ENCODE measurements at regions of chr13 and their contacts with region 1.

Region 1: DNA sequence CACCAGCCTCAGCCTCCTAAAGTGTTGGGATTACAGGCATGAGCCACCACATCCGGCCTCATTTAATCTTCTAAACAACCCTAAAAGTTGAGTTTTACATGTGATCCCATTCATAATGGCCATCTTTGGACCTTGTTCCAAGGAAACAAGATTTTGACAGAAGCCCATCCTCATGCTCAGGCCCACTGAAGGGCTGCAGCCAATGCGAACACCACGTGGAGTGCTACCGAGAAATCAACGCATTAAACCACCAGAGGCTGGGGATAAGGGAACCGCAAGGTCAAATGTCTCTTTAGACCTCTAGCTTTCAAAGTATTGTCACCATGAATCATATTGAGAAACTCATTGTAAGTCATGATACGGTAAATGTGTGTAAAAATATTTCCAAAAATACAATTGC is 49.4 kb upstream of the DOCK9 start:
- DNase-seq: peak; percentile 73
- H3K4me3 Mint-ChIP-seq: peak overlapping the region; percentile 44
- H3K27ac Mint-ChIP-seq: peak overlapping the region; percentile 90
- H3K4me1 Mint-ChIP-seq: peaks cover 93% of the 10 kb centered on the region
- H3K27me3 Mint-ChIP-seq: no peaks in the 10 kb centered on the region

Region 2: DNA sequence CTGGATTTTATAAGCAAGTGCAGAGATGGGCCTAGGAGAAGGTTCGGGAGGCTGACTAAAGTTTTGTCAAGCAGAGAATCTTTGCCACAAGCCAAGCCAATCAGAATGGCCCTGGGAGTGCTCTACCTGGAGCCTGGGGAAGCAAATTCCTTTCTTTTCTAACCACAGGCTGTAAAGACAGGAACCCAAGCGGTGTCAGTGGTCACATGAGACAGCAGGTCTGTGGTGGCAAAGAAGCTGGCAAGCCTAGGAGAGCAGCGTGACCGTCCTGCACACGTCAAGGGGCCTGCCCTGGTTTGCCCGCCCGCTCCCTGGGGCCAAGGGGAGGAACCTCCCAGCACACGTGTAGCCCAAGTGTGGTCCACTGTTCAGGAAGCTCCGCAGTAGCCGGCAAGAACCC is 983.0 kb before region 1 on chr13:
- CTCF ChIA-PET with region 1: no interaction called
- POLR2A ChIA-PET with region 1: no interaction called
- intact Hi-C with region 1: no loop called
- DNase-seq: no peak
- H3K4me3 Mint-ChIP-seq: no peak overlapping the region
- H3K27ac Mint-ChIP-seq: no peak overlapping the region
- H3K4me1 Mint-ChIP-seq: no peaks in the 10 kb centered on the region
- H3K27me3 Mint-ChIP-seq: peaks cover 3% of the 10 kb centered on the region

Region 3: GRCh38 chr13:98576963-98577822 is 450.1 kb before region 1 on chr13 and contains the start of gene STK24:
- CTCF ChIA-PET with region 1: no interaction called
- POLR2A ChIA-PET with region 1: no interaction called
- intact Hi-C with region 1: no loop called
- DNase-seq: peak; percentile 66
- H3K4me3 Mint-ChIP-seq: peak within 1 kb of the TSS; percentile 87
- H3K27ac Mint-ChIP-seq: peak within 1 kb of the TSS; percentile 98
- H3K4me1 Mint-ChIP-seq: peaks cover 40% of the 10 kb centered on the region
- H3K27me3 Mint-ChIP-seq: no peaks in the 10 kb centered on the region
- total RNA-seq, gene STK24: 176 to 178 TPM

Region 4: GRCh38 chr13:98821372-98822224 is 205.7 kb before region 1 on chr13:
- CTCF ChIA-PET with region 1: no interaction called
- POLR2A ChIA-PET with region 1: no interaction called
- intact Hi-C with region 1: no loop called
- DNase-seq: no peak
- H3K4me3 Mint-ChIP-seq: no peak overlapping the region
- H3K27ac Mint-ChIP-seq: no peak overlapping the region
- H3K4me1 Mint-ChIP-seq: peaks cover 4% of the 10 kb centered on the region
- H3K27me3 Mint-ChIP-seq: no peaks in the 10 kb centered on the region

Region 5: DNA sequence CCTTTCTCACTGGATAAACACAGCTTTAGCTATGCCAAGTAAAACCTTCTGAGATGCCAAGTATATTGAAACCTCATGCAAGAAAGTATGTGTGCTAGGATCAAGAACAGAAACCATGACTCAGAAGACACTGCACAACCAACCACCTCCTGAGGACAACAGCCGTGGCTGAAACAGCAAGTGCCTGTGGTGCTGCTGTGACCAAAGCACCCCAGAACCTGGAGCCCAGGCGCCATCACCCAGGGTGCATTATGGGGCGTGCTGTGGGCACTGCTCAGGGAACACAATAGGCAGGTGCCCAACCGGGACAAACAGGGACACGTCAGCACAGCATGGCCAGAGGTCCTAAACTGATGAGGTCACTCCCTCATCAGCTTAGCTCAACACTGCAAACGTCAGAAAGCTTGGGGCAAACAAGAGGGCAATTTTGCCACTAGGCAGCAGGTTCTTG is 173.5 kb before region 1 on chr13:
- CTCF ChIA-PET with region 1: interaction called, 3 read pairs
- POLR2A ChIA-PET with region 1: no interaction called
- intact Hi-C with region 1: loop called (anchors 2 kb)
- DNase-seq: peak; percentile 87
- H3K4me3 Mint-ChIP-seq: no peak overlapping the region
- H3K27ac Mint-ChIP-seq: peak overlapping the region; percentile 46
- H3K4me1 Mint-ChIP-seq: peaks cover 12% of the 10 kb centered on the region
- H3K27me3 Mint-ChIP-seq: no peaks in the 10 kb centered on the region

Region 6: DNA sequence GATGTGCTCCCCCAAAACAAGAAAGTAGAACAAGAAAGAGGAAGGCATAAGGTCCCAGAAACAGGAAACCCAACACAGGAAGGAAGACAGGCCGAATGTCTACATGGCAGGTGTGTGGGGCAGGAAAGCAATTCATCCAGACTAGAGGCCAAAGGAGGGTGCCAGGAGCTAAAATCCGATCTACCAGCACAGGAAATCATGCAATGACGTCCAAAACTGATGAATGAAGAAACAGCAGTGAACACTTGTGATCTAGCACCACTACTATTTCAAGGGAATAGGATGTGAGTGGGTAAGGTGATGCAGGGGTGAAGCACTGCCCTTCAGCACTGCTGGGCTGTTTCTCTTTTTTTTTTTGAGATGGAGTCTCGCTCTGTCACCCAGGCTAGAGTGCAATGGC is 108.5 kb before region 1 on chr13:
- CTCF ChIA-PET with region 1: interaction called, 4 read pairs
- POLR2A ChIA-PET with region 1: no interaction called
- intact Hi-C with region 1: loop called (anchors 2 kb)
- DNase-seq: peak; percentile 32
- H3K4me3 Mint-ChIP-seq: no peak overlapping the region
- H3K27ac Mint-ChIP-seq: peak overlapping the region; percentile 71
- H3K4me1 Mint-ChIP-seq: peaks cover 36% of the 10 kb centered on the region
- H3K27me3 Mint-ChIP-seq: no peaks in the 10 kb centered on the region

Region 7: GRCh38 chr13:99046851-99047250 is 19.6 kb after region 1 on chr13:
- CTCF ChIA-PET with region 1: interaction called, 27 read pairs
- POLR2A ChIA-PET with region 1: interaction called, 5 read pairs
- intact Hi-C with region 1: loop called (anchors 1 kb)
- DNase-seq: no peak
- H3K4me3 Mint-ChIP-seq: peak overlapping the region; percentile 63
- H3K27ac Mint-ChIP-seq: peak overlapping the region; percentile 92
- H3K4me1 Mint-ChIP-seq: peaks cover 94% of the 10 kb centered on the region
- H3K27me3 Mint-ChIP-seq: no peaks in the 10 kb centered on the region

Region 8: DNA sequence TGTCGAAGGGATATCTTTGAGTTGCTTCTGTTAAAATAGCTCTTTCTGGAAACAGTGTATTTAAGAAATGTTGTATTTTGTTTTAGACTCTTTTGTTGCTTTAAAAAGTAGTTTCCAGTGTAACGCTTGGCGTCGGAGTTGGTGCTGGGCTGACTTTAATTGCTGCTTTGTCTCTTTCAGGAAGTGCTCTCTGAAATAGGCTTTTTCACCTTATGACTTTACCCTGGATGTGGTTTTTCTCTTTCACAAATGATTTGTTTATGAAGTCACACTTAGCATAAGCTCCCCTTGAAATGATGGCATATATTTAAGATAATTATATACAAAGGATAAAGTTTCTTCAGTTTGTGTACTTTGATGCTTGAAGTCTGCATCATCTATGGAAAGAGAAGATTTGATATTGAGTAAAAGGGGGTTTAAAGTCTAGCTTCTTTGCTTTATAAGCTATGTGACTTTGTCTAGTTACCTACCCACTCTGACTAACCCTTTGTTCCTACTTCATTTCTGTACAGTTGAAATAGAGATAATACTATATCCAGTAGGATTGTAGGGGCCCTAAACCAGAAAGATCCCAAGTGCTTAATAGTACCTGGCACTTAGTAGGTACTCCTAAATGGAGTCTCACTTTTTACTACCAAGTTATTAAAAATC is 231.1 kb after region 1 on chr13 and contains the start of gene GPR18:
- CTCF ChIA-PET with region 1: no interaction called
- POLR2A ChIA-PET with region 1: no interaction called
- intact Hi-C with region 1: loop called (anchors 2 kb)
- DNase-seq: peak; percentile 57
- H3K4me3 Mint-ChIP-seq: peak within 1 kb of the TSS; percentile 77
- H3K27ac Mint-ChIP-seq: peak within 1 kb of the TSS; percentile 90
- H3K4me1 Mint-ChIP-seq: peaks cover 76% of the 10 kb centered on the region
- H3K27me3 Mint-ChIP-seq: no peaks in the 10 kb centered on the region
- total RNA-seq, gene GPR18: 2.4 to 2.8 TPM

Region 9: DNA sequence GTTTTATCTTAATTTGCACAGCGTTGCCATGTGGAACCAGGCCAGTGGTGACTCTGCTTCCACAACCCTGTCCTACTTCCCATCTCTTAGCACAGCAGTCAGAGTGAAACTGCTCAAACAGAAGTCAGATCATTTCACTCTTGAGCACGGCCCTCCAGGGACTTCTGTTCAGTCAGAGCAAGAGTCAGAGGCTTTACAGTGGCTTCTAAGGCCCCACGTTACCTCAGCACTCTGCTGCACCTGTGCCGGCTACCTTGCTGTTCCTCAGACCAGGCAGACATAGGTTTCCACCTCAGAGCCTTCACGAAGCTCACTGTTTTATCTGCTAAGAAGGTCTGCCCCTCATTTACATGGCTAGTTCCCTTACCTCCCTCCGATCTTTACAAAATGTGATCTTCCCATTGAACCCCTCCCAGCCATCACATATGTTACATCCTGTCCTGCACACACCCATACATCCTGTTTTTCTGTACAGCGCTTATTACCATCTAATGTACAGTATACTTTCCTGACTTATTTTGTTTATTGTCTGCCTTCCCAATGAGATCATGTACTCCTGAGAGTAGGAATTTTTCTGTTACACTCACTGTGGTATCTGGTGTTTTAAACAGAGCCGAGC is 515.6 kb after region 1 on chr13:
- CTCF ChIA-PET with region 1: no interaction called
- POLR2A ChIA-PET with region 1: no interaction called
- intact Hi-C with region 1: no loop called
- DNase-seq: peak; percentile 78
- H3K4me3 Mint-ChIP-seq: no peak overlapping the region
- H3K27ac Mint-ChIP-seq: peak overlapping the region; percentile 24
- H3K4me1 Mint-ChIP-seq: peaks cover 51% of the 10 kb centered on the region
- H3K27me3 Mint-ChIP-seq: no peaks in the 10 kb centered on the region